ENCODE measurements at regions of chr1 and their contacts with region 1.

Region 1: GRCh38 chr1:22704440-22705067 is 6.1 kb upstream of the EPHB2 start:
- DNase-seq: peak; percentile 76
- H3K4me3 ChIP-seq: no peak overlapping the region
- H3K27ac ChIP-seq: no peak overlapping the region
- H3K4me1 ChIP-seq: peaks cover 14% of the 10 kb centered on the region
- H3K27me3 ChIP-seq: no peaks in the 10 kb centered on the region
- CTCF ChIP-seq: peak; percentile 88 to 90
- POLR2A ChIP-seq: no peak

Region 2: GRCh38 chr1:22673486-22674409 is 30.8 kb before region 1 on chr1:
- CTCF ChIA-PET with region 1: interaction called, 87 read pairs
- POLR2A ChIA-PET with region 1: no interaction called
- dilution Hi-C with region 1: no loop called
- intact Hi-C with region 1: loop called (anchors 2 kb)
- DNase-seq: peak; percentile 74
- H3K4me3 ChIP-seq: no peak overlapping the region
- H3K27ac ChIP-seq: no peak overlapping the region
- H3K4me1 ChIP-seq: peaks cover 10% of the 10 kb centered on the region
- H3K27me3 ChIP-seq: peaks cover 11 to 12% of the 10 kb centered on the region in 2 experiments
- CTCF ChIP-seq: peak; percentile 67 to 86
- POLR2A ChIP-seq: no peak

Region 3: DNA sequence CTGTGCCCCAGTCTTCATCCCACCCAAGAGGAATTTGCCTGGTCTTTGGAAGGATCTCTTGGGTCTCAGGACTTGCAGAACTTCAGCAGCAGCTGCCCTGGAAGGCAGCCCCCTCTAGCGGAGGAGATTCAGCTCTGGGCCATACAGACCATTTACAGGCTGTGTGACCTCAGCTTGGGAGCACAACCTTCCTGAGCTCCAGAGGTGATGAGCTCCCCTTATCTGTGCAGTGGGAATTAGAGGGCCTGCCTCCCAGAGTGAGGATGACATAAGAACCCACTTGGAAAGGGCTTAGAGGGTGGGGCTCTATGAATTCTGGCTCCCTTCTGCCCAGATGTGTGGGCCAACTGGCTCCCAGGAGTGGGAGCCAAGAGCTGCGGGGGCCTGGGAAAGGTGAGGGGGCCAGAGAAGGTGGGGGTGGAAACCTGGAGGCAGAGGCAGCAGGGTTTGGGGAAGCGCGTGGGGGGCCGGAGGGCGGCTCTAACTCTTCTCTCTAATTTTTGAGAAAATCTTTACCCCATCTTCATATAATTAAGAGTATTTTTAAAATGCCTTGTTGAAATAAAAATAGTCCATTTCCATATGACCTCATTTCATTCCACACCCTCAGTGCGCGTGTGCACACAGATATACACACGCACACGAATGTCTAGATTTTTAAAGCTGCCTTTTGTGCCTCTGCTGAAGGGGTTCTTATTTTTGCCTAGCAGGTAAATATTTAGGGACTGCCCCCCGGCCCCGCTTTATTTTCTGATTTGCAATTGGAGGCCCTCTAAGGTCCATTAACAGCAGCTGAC is 27.6 kb after region 1 on chr1:
- CTCF ChIA-PET with region 1: interaction called, 26 read pairs
- POLR2A ChIA-PET with region 1: no interaction called
- dilution Hi-C with region 1: no loop called
- intact Hi-C with region 1: no loop called
- DNase-seq: no peak
- H3K4me3 ChIP-seq: no peak overlapping the region
- H3K27ac ChIP-seq: no peak overlapping the region
- H3K4me1 ChIP-seq: no peaks in the 10 kb centered on the region
- H3K27me3 ChIP-seq: no peaks in the 10 kb centered on the region
- CTCF ChIP-seq: peak; percentile 24 to 44
- POLR2A ChIP-seq: no peak

Region 4: DNA sequence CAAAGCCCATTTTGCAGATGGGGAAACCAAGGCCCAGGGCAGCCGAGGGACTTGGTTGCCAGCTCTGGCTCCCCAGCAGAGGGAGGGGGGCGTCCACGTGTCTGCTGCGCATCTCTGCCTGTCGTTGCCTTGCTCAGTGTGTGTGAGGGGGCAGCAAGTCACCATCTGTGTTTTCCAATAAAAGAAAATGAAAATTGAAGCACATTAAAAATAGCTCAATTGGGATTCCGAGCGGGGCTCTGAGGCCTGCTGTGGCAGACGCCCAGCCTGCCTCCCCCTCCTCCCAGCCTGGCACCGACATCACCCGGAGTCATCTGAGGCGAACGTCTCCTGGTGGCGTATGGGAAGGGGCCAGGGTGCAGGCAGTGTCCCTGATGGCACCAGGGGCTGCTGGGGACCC is 57.3 kb after region 1 on chr1:
- CTCF ChIA-PET with region 1: interaction called, 14 read pairs
- POLR2A ChIA-PET with region 1: no interaction called
- dilution Hi-C with region 1: no loop called
- intact Hi-C with region 1: no loop called
- DNase-seq: no peak
- H3K4me3 ChIP-seq: no peak overlapping the region
- H3K27ac ChIP-seq: no peak overlapping the region
- H3K4me1 ChIP-seq: no peaks in the 10 kb centered on the region
- H3K27me3 ChIP-seq: no peaks in the 10 kb centered on the region
- CTCF ChIP-seq: no peak
- POLR2A ChIP-seq: no peak

Region 5: DNA sequence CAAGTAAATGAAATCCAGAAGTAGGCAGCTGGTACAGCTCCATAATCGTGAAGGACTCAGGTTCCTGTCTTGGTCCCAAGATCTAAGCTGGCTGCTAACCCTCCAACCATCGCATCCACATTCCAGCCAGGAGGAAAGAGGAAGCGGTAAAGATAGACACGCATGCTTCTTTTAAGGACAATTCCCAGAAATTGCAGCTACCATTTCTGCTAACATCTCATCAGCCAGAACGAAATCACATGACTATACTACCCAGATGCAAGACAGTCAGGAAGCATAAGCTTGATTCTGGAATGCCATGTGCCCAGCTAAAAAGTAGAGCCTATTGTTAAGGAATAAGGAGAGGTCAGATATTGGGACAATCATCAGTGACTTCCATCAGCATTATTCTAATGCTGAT is 116.5 kb after region 1 on chr1:
- CTCF ChIA-PET with region 1: interaction called, 12 read pairs
- POLR2A ChIA-PET with region 1: no interaction called
- dilution Hi-C with region 1: no loop called
- intact Hi-C with region 1: no loop called
- DNase-seq: peak; percentile 58
- H3K4me3 ChIP-seq: no peak overlapping the region
- H3K27ac ChIP-seq: peak overlapping the region; percentile 67
- H3K4me1 ChIP-seq: peaks cover 21% of the 10 kb centered on the region
- H3K27me3 ChIP-seq: no peaks in the 10 kb centered on the region
- CTCF ChIP-seq: no peak
- POLR2A ChIP-seq: no peak

Region 6: DNA sequence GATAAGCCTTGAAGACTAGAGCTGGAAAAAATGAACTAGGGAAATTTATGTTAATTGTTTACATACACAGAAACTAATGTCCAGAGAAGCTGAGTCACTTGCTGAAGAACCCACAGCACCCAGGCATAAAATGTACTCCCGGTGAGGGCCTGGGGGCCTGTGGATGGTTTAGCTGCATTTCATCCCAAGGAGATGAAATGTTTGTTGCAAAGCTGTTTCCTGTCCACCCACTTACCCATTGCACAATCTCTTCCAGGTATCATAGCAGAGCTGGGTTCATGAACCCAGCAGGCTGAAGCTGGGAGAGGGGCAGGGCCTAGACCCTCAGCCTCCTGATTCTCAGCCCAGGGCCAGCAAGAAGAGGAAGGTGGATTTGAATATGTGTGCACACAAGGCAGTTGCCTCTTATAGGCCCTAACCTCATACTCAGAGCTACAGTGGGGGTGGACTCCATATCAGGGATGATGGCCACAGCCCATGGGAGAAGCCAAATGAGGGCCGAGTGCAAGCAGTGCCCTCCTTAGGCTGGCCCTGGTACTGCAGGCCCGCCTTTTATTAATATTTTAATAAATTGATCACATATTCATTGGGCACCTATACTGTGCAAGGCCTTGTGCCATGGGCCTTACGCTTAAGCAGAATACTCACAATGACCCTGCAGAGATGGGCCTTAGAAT is 157.3 kb after region 1 on chr1:
- CTCF ChIA-PET with region 1: interaction called, 164 read pairs
- POLR2A ChIA-PET with region 1: no interaction called
- dilution Hi-C with region 1: no loop called
- intact Hi-C with region 1: loop called (anchors 1 kb)
- DNase-seq: peak; percentile 62
- H3K4me3 ChIP-seq: no peak overlapping the region
- H3K27ac ChIP-seq: no peak overlapping the region
- H3K4me1 ChIP-seq: peaks cover 3% of the 10 kb centered on the region
- H3K27me3 ChIP-seq: no peaks in the 10 kb centered on the region
- CTCF ChIP-seq: peak; percentile 88 to 91
- POLR2A ChIP-seq: no peak

Region 7: DNA sequence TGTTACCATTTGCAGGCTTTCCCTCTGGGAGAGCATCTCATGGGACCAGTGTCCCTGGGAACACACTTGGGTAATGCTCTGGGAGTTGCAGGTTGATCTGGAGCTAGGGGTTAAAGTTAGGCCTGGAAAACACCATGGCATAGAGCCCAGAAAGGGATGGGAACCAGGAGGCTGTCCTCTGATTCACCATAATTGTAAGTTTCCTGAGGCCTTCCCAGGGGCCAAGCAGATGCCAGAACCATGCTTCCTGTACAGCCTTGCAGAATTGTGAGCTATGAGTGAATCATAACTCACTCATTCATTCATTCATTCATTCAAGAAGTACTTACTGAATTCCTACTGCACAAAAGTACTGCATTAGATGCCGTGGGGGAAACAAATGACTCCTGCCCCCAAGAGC is 218.1 kb after region 1 on chr1:
- CTCF ChIA-PET with region 1: interaction called, 15 read pairs
- POLR2A ChIA-PET with region 1: no interaction called
- dilution Hi-C with region 1: no loop called
- intact Hi-C with region 1: no loop called
- DNase-seq: peak; percentile 73
- H3K4me3 ChIP-seq: no peak overlapping the region
- H3K27ac ChIP-seq: no peak overlapping the region
- H3K4me1 ChIP-seq: no peaks in the 10 kb centered on the region
- H3K27me3 ChIP-seq: no peaks in the 10 kb centered on the region
- CTCF ChIP-seq: no peak
- POLR2A ChIP-seq: no peak

Measured in endothelial cell of umbilical vein (primary cell).